H1 (cell line): ENCODE measurements at regions of chr3 and their contacts with region 1.

Region 1: GRCh38 chr3:172595641-172596393 is 72.6 kb upstream of the TNFSF10 start:
- DNase-seq: no peak
- H3K4me3 ChIP-seq: no peak overlapping the region
- H3K27ac ChIP-seq: no peak overlapping the region
- H3K4me1 ChIP-seq: no peaks in the 10 kb centered on the region
- H3K27me3 ChIP-seq: no peaks in the 10 kb centered on the region
- CTCF ChIP-seq: peak in 2 of 3 experiments; percentile 63 to 66; a peak in 3 of 4 replicates
- EP300 ChIP-seq: no peak
- POLR2A ChIP-seq: no peak
- RAD21 ChIP-seq: peak; percentile 71 to 77

Region 2: DNA sequence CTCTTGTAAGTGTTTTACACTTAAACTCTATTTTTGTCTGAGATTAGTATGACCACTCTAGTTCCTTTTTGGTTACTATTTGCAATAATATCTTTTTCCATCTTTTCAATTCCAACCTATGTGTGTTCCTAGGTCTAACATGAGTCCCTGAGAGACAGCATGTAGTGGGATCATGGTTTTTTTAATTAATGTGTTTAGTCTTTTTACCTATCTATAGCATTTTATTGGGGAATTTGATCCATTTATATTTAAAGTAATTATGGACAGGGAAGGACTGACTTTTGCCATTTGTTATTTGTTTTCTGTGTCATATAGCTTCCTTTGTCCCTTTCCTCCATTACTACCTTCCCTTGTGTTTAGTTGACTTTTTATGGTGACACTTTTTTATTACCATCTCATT is 94.3 kb before region 1 on chr3:
- CTCF ChIA-PET with region 1: interaction called, 10 read pairs
- POLR2A ChIA-PET with region 1: no interaction called
- DNase-seq: no peak
- H3K4me3 ChIP-seq: no peak overlapping the region
- H3K27ac ChIP-seq: no peak overlapping the region
- H3K4me1 ChIP-seq: no peaks in the 10 kb centered on the region; a peak in 2 of 7 replicates
- H3K27me3 ChIP-seq: no peaks in the 10 kb centered on the region
- CTCF ChIP-seq: no peak
- EP300 ChIP-seq: no peak
- POLR2A ChIP-seq: no peak
- RAD21 ChIP-seq: no peak

Region 3: GRCh38 chr3:172607305-172608121 is 11.7 kb after region 1 on chr3:
- CTCF ChIA-PET with region 1: interaction called, 50 read pairs
- POLR2A ChIA-PET with region 1: no interaction called
- DNase-seq: peak in 1 of 2 experiments; percentile 29
- H3K4me3 ChIP-seq: peak overlapping the region in 1 of 4 experiments; percentile 10; a peak in 1 of 8 replicates
- H3K27ac ChIP-seq: no peak overlapping the region; the same call in 1 of the 2 replicates
- H3K4me1 ChIP-seq: peaks cover 0 to 8% (median 2%) of the 10 kb centered on the region in 4 experiments; a peak in 2 of 7 replicates
- H3K27me3 ChIP-seq: no peaks in the 10 kb centered on the region
- CTCF ChIP-seq: no peak
- EP300 ChIP-seq: no peak
- POLR2A ChIP-seq: no peak
- RAD21 ChIP-seq: no peak